HEK293T (cell line): ENCODE measurements at regions of chr10 and their contacts with region 1.

Region 1: DNA sequence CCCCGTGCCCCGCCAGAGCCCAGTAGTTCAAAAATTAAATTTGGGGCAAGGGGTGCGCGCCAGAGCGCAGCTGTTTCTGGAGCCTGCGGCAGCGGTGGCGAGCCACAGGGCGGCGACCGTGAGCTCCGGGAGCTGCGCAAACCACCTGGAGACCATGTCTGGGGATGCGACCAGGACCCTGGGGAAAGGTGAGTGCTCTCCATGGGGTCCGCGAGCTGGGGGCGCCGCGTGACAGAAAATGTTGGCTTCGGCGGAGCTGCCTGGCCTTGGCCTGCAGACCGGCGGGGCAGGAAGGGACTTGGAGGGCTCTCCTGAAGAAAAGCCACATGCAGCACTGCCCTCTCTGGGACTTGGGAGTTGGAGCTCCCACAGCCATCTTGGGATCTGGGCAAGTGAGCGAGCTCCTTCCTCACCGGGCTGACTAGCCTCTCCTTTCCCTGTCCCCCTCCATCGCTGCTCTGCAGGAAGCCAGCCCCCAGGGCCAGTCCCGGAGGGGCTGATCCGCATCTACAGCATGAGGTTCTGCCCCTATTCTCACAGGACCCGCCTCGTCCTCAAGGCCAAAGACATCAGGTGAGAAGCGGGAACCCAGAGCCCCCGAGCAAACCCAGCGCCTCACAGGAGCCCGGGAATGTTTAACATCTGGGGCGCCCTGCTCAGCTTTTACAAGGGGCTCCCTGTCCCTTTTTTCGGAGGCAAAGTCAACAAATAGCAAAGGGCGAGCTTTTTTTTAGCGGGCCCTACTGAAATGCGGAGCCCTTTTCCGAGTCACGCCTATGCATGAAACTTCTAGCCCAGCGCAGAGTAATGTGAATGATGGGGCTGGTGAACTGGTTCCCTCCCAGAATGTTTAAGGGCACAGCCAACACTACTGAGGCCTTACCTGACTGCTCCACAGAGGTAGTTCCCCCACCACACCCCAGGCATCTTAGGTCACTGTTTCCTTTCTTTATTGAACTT is 6.1 kb downstream of the GSTO2 start:
- DNase-seq: peak; percentile 83

Region 2: DNA sequence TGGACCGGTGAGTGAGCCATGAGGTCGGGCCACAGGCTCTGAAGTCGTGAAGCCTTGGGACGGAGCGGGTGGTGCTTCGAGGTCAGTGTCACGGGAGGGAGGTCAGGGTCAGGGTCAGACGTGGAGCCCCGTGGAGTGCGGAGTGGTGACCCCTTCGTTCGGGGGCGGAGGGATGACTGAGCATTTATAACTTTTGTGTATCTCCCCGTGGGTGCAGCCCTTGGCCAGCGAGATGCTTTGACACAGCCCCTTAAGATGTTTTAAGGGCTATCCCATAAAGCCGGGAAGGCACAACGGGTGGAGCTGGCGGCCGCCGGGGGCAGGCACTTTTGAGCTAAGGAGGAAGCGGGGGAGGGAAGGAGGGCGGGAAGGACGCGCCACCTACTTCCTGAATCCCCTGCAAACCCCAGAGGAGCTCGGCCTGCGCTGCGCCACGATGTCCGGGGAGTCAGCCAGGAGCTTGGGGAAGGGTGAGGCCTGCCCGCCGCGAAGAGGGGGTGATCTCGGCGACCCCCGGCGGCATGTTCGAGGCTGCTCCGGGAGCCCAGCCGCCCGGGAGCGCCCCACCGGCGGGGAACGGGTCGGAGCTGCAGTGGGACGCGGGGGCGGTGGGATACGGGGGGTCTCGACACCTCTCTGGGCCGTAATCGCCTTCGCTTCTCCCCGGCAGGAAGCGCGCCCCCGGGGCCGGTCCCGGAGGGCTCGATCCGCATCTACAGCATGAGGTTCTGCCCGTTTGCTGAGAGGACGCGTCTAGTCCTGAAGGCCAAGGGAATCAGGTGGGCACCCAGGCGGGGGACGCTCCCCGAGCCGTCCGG is 20.3 kb before region 1 on chr10 and contains the start of gene GSTO1:
- CTCF ChIA-PET with region 1: interaction called, 12 read pairs
- POLR2A ChIA-PET with region 1: interaction called, 23 read pairs
- DNase-seq: peak; percentile 77

Region 3: GRCh38 chr10:104291439-104291951 is 16.5 kb after region 1 on chr10:
- CTCF ChIA-PET with region 1: interaction called, 25 read pairs
- POLR2A ChIA-PET with region 1: no interaction called
- DNase-seq: peak; percentile 96

Region 4: DNA sequence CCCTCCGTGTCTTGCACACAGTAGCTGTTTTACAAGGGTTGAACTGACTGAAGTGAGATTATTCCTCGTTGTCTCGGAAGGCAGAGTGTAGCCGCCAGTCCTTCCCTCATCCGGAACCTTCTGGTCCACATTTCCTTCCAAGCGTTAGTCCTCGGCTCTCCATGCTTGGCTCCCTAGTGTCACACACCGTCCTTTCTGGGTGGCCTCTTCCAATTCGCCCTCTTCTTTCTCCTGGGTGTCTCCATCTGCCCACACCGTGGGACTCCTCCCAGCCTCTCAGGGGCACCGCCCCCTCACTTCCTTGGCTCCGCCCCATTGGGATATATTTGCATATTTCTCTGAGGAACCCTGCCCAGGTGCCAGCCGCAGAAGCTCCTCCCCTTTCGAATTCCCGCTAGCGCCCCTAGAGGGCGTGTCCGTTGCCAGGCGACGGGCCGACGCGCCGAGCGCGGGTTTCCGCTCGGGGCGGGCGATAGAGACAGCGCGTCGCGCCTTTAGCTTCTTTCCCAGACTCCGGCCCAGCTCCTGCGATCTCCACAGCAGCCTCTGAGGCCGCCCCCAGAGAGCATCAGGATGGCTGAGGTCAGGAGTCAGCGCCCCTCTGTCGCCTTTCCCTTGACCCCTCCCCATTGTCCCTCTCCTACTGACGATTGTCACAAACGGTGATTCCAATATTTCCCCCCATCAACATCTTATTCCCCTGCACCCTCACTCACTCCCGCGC is 78.4 kb after region 1 on chr10 and contains the start of gene CFAP58:
- CTCF ChIA-PET with region 1: interaction called, 15 read pairs
- POLR2A ChIA-PET with region 1: interaction called, 5 read pairs
- DNase-seq: peak; percentile 99